PC-9 (cell line): ENCODE measurements at regions of chr6 and their contacts with region 1.

Region 1: GRCh38 chr6:157764178-157765033 is 58.6 kb upstream of the SNX9 start:
- DNase-seq: peak; percentile 91 to 99
- H3K4me3 ChIP-seq: peak overlapping the region; percentile 6; the same call in 1 of the 2 replicates
- H3K27ac ChIP-seq: peak overlapping the region; percentile 99
- H3K4me1 ChIP-seq: peaks cover 59% of the 10 kb centered on the region
- H3K27me3 ChIP-seq: no peaks in the 10 kb centered on the region
- CTCF ChIP-seq: no peak

Region 2: DNA sequence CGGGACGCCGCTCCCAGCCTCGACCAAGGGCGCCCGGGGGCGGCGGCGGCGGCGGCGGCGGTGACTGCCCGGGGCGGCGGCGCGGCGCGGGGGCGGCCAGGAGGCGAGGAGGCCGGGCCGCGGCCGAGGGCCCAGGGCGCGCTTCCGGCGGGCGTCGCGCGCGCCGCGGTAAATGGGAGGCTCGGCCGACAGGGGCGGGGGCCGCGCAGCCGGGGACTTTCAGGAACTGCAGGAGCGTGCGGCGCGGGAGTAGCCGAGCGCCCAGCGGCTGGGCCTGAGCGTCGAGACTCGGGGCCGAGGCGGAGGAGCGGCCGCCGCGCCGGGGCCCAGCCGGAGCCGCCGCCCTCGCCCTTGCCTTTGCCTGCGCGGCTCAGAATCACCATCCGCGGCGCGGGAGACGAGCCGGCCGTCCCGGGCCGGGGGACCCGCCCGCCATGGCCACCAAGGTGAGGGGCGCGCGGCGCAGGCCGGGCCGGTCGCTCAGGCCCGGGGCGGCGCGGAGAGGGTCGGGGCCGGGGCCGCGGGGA is 58.7 kb after region 1 on chr6 and contains the start of gene SNX9:
- CTCF ChIA-PET with region 1: no interaction called
- POLR2A ChIA-PET with region 1: no interaction called
- intact Hi-C with region 1: loop called (anchors 2 kb)
- DNase-seq: peak in 1 of 2 experiments; percentile 56
- H3K4me3 ChIP-seq: peak within 1 kb of the TSS; percentile 82
- H3K27ac ChIP-seq: peak within 1 kb of the TSS; percentile 70
- H3K4me1 ChIP-seq: peaks cover 17% of the 10 kb centered on the region
- H3K27me3 ChIP-seq: no peaks in the 10 kb centered on the region
- CTCF ChIP-seq: no peak
- total RNA-seq, gene SNX9: 22.5 and 25.0 TPM in 2 replicates

Region 3: GRCh38 chr6:157841211-157841840 is 76.9 kb after region 1 on chr6:
- CTCF ChIA-PET with region 1: no interaction called
- POLR2A ChIA-PET with region 1: interaction called, 4 read pairs
- intact Hi-C with region 1: loop called (anchors 2 kb)
- DNase-seq: peak; percentile 52 to 79
- H3K4me3 ChIP-seq: no peak overlapping the region
- H3K27ac ChIP-seq: peak overlapping the region; percentile 90
- H3K4me1 ChIP-seq: peaks cover 40% of the 10 kb centered on the region
- H3K27me3 ChIP-seq: no peaks in the 10 kb centered on the region
- CTCF ChIP-seq: no peak

Region 4: GRCh38 chr6:158060455-158061360 is 296.3 kb after region 1 on chr6:
- CTCF ChIA-PET with region 1: no interaction called
- POLR2A ChIA-PET with region 1: no interaction called
- intact Hi-C with region 1: loop called (anchors 5 kb)
- DNase-seq: peak; percentile 89 to 95
- H3K4me3 ChIP-seq: peak overlapping the region; percentile 37; the same call in 1 of the 2 replicates
- H3K27ac ChIP-seq: peak overlapping the region; percentile 95
- H3K4me1 ChIP-seq: peaks cover 71% of the 10 kb centered on the region
- H3K27me3 ChIP-seq: no peaks in the 10 kb centered on the region
- CTCF ChIP-seq: no peak